ENCODE measurements at regions of chr1 and their contacts with region 1.

Region 1: DNA sequence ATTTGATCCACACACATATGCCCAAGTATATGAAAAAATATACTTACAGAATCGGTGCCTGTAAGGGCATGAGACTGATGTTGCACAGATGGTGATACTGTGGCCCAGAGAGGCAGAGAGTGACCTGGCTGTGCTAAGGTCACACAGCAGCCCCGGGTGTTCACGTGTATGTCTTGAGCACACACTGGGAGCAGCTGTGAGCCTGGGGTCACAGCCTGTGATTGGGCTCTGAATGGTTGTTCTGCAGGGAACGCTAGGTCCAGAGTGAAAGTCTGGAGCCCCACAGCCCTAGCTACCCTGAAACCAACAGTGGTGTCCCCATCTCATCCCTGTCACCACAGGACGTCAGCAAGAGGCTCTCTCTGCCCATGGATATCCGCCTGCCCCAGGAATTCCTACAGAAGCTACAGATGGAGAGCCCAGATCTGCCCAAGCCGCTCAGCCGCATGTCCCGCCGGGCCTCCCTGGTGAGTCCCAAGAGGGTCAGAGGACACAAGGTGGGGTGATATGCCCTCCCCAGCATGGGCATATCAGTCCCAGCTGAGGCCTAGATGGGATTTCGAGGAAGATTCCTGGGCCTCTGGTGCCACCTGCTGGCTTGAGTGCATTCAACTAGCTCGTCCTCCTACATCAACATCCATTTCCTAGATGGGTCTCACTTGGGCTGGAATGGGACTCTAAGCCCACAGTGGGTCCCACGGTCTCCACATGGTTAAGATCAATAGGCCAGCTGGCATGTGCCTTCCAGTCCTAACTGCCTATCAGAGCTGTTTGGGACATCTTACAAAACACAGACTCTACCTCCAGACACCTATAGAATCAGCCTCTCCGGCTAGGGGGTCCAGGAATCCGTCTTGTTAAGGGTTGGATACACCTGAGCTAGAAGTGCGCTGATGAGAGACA is 19.7 kb downstream of the CDK18 start:
- DNase-seq: peak; percentile 63 to 94
- H3K4me3 ChIP-seq: no peak overlapping the region
- H3K27ac ChIP-seq: no peak overlapping the region
- H3K4me1 ChIP-seq: peaks cover under 1 to 27% (median 12%) of the 10 kb centered on the region in 4 experiments
- H3K27me3 ChIP-seq: no peaks in the 10 kb centered on the region
- CTCF ChIP-seq: peak; percentile 73 to 94 (median 93)
- EP300 ChIP-seq: no peak
- POLR2A ChIP-seq: no peak
- RAD21 ChIP-seq: peak; percentile 96 to 97

Region 2: DNA sequence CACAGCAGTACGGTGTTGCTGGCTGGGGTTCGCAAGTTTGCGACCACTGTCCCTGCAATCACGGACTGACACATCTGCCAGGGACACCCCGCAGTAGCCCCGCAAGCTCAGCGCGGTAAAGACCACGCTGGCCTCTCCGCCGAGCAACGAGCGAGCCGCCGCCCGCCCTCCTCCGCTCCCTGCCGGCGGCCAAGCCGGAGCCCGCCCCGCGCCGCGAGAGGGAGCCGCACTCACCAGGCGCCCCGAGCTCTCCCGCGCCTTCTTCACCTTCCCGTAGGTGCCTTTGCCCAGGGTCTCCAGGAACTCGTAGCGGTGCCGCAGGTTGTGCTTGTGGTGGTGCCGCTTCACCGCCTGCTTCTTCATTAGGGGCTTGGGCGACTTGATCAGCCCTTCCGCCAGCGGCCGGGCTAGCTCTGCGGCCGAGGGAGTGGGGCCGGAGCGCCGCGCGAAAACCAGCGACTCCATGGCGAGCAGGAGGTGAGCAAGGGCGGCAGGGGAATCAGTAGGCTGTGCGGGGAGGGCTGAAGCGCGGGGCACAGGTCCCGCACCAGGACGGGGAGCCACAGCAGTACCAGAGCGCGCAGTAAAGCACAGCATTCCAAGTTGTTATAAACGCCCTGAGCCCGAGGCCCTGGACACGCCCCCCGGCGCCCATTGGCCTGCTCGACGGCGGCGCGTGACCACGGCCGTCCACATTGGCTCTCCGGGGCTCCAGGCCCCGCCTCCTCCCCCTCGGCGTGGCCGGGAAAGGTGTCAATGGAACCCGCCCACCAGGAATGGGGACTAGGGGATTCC is 202.8 kb before region 1 on chr1 and contains the start of gene NUAK2:
- CTCF ChIA-PET with region 1: interaction called, 17 read pairs
- POLR2A ChIA-PET with region 1: interaction called, 3 read pairs
- DNase-seq: peak; percentile 82 to 96
- H3K4me3 ChIP-seq: peak within 1 kb of the TSS; percentile 67 to 93 (median 80)
- H3K27ac ChIP-seq: peak within 1 kb of the TSS; percentile 81
- H3K4me1 ChIP-seq: peaks cover 26 to 37% (median 31%) of the 10 kb centered on the region in 4 experiments
- H3K27me3 ChIP-seq: no peaks in the 10 kb centered on the region
- CTCF ChIP-seq: no peak
- EP300 ChIP-seq: no peak
- POLR2A ChIP-seq: peak; percentile 63 to 92
- RAD21 ChIP-seq: no peak
- total RNA-seq, gene NUAK2: 12.7 and 12.9 TPM in 2 replicates

Region 3: DNA sequence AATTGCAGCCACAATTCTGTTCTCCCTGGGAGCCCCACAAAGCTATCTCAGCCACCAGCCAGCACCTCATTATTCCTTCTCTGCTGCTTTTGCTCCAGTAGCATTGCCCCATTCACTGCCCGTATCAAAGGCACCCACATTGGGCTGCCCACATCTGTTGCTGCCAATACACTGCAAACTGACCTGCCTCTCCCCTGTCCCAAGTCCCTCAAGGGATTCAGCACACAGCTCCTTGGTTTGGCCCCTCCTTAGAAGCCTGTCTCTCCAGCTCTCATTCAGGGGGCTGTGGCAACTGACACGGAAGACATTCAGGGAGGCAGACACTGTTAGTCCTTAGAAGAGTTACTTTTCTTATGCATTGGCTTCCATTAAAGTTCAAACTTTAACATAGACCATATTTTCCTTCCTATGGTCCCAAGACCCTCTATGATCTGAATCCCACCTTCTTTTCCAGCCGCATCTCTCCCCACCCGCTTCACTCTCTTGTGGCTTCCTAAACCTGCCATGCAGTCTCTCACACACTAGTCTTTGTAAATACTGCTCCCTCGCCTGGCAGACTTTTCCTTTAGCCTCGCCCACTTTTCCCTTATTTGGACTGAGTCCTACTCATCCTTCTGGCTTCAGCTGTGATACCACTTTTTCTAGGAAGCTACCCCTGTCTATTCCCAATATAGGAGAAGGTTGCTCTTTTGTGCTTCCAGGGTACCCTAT is 148.2 kb before region 1 on chr1:
- CTCF ChIA-PET with region 1: interaction called, 17 read pairs
- POLR2A ChIA-PET with region 1: no interaction called
- DNase-seq: no peak
- H3K4me3 ChIP-seq: peak overlapping the region in 3 of 4 experiments; percentile 4 to 36 (median 30); a peak in 4 of 8 replicates
- H3K27ac ChIP-seq: 0 out of 2 replicates have a peak overlapping the region, but pooled peaks have one; percentile 0
- H3K4me1 ChIP-seq: peaks cover 9 to 25% (median 19%) of the 10 kb centered on the region in 4 experiments; a peak in 5 of 7 replicates
- H3K27me3 ChIP-seq: no peaks in the 10 kb centered on the region
- CTCF ChIP-seq: no peak
- EP300 ChIP-seq: no peak
- POLR2A ChIP-seq: no peak
- RAD21 ChIP-seq: no peak

Region 4: DNA sequence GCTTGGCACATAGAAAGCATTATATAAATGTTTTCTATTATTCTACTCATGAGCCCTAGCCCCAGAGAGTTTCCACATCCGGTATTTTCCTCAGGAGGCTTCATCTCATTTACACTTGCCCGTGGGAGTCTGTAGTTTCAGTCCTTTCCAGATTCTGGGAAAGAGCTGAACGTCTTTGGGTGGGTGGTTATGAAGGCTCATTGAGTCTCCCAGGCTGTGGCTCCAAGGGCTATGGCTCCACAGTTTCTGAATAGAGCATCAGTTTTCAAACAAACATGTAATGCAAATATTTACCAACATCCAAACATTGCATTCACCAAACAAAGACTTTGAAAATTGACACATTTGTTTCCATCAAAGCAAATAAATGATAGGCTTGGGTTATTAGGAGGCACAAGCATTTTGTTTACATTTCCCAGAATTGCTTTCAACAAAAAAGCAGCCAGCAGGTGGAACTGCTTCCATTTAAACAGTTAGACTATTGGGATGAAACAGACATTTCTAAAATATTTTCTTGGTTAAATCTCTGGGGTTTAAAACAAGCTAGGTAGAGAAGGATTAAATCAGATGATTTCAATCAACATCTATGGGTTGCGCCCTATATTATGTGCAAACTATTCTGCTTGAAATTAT is 101.0 kb before region 1 on chr1:
- CTCF ChIA-PET with region 1: interaction called, 16 read pairs
- POLR2A ChIA-PET with region 1: no interaction called
- DNase-seq: no peak
- H3K4me3 ChIP-seq: no peak overlapping the region
- H3K27ac ChIP-seq: no peak overlapping the region
- H3K4me1 ChIP-seq: peaks cover 0 to 7% (median 2%) of the 10 kb centered on the region in 4 experiments; a peak in 4 of 7 replicates
- H3K27me3 ChIP-seq: no peaks in the 10 kb centered on the region; a peak in 2 of 7 replicates
- CTCF ChIP-seq: peak in 1 of 3 experiments; percentile 13; a peak in 1 of 4 replicates
- EP300 ChIP-seq: no peak
- POLR2A ChIP-seq: no peak
- RAD21 ChIP-seq: peak; percentile 7 to 20; a peak in 3 of 4 replicates

Region 5: DNA sequence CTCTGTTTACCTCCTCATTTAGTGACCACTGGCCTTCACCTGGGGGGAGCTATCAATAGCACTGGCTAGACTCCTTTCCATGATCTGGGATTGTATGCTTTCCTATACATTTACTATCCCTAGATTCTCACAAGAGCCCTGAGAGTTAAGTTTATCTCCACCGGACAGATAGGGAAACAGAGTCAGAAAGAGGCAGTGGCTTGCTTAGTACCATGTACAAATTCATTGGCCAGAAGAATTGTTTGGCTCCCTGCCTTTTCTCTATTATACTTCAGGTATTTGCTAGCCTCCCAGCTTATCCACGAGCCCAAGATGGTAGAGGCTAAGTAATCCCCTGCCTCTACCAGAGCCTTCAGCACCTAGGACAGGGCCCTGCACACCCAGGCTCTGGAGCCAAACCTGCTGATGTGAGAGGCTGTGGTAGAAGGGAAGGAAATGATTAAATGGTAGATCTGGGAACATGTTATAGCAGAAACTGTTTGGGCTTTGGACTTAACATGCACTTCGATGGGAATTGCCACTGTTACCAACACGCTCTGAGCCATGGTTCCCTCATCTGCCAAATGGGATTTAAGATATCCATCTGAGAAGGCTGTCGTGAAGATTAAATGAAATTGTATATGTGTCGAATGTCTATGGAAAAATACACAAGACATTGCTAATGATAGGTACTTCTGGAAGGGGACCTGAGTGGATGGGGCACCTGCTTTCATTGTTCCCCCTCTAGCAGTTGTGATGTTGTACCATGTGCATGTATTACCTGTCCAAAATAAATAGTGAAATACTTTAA is 65.2 kb before region 1 on chr1:
- CTCF ChIA-PET with region 1: interaction called, 13 read pairs
- POLR2A ChIA-PET with region 1: interaction called, 4 read pairs
- DNase-seq: peak in 1 of 2 experiments; percentile 80
- H3K4me3 ChIP-seq: no peak overlapping the region
- H3K27ac ChIP-seq: no peak overlapping the region
- H3K4me1 ChIP-seq: peaks cover 7 to 23% (median 13%) of the 10 kb centered on the region in 4 experiments
- H3K27me3 ChIP-seq: peaks cover 0 to 2% (median 0%) of the 10 kb centered on the region in 4 experiments; a peak in 2 of 7 replicates
- CTCF ChIP-seq: no peak
- EP300 ChIP-seq: no peak
- POLR2A ChIP-seq: no peak
- RAD21 ChIP-seq: peak in 1 of 2 experiments; percentile 32; a peak in 1 of 4 replicates

Region 6: GRCh38 chr1:205536759-205537361 is 12.7 kb after region 1 on chr1:
- CTCF ChIA-PET with region 1: interaction called, 60 read pairs
- POLR2A ChIA-PET with region 1: interaction called, 4 read pairs
- DNase-seq: peak in 1 of 2 experiments; percentile 41
- H3K4me3 ChIP-seq: no peak overlapping the region
- H3K27ac ChIP-seq: no peak overlapping the region
- H3K4me1 ChIP-seq: no peaks in the 10 kb centered on the region; a peak in 2 of 7 replicates
- H3K27me3 ChIP-seq: peaks cover 0 to 19% (median 15%) of the 10 kb centered on the region in 4 experiments; a peak in 6 of 7 replicates
- CTCF ChIP-seq: no peak
- EP300 ChIP-seq: no peak
- POLR2A ChIP-seq: no peak
- RAD21 ChIP-seq: no peak

Region 7: DNA sequence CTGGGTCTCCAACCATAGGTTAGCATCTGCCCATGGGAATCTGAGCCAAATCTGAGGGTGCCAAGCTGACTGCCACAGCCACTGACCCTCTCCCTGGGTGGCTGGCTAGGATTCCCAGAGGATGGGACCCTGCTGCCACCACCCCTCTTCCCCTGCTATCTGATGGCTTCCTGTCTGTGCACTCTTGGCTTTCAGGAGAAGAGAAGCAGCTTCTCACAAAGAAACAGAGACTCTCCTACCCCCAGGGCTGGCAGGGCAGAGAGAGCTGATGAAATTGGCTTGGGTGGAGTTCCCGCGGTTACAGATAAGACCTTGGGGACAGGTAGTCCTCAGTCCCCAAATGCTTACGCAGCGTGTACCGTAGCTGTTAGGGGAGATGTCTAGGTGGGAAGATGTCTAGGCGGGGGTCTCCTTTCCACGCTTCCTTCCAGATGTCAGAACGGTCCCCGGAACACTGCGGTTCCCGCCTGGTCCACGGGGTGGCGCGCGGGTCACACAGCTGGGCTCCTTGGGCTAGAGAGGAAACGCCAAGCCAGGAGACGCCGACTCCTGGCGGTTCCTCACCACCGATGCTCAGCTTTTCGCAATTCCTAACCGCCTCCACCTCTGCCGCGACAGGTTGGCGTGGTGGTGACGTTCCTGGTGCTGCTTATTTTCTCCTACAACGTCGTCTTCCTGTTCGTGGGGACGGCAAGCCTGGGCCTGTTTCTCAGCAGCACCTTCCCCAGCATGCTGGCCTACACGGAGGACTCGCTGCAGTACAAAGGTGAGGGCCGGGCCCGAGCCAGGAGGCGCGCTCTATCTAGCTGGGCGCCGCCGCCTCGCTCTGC is 67.6 kb after region 1 on chr1:
- CTCF ChIA-PET with region 1: interaction called, 24 read pairs
- POLR2A ChIA-PET with region 1: interaction called, 3 read pairs
- DNase-seq: peak; percentile 58 to 100
- H3K4me3 ChIP-seq: peak overlapping the region; percentile 26 to 57 (median 36); a peak in 5 of 8 replicates
- H3K27ac ChIP-seq: no peak overlapping the region
- H3K4me1 ChIP-seq: peaks cover 0 to 7% (median 4%) of the 10 kb centered on the region in 4 experiments; a peak in 5 of 7 replicates
- H3K27me3 ChIP-seq: 0 out of 7 replicates have a peak, but pooled peaks cover 0 to 2% (median 0%) of the 10 kb centered on the region in 4 experiments
- CTCF ChIP-seq: peak; percentile 91 to 99 (median 94)
- EP300 ChIP-seq: no peak
- POLR2A ChIP-seq: 0 out of 3 replicates have a peak, but pooled peaks of 1 of the 2 experiments have one; percentile 39
- RAD21 ChIP-seq: peak; percentile 98

Region 8: DNA sequence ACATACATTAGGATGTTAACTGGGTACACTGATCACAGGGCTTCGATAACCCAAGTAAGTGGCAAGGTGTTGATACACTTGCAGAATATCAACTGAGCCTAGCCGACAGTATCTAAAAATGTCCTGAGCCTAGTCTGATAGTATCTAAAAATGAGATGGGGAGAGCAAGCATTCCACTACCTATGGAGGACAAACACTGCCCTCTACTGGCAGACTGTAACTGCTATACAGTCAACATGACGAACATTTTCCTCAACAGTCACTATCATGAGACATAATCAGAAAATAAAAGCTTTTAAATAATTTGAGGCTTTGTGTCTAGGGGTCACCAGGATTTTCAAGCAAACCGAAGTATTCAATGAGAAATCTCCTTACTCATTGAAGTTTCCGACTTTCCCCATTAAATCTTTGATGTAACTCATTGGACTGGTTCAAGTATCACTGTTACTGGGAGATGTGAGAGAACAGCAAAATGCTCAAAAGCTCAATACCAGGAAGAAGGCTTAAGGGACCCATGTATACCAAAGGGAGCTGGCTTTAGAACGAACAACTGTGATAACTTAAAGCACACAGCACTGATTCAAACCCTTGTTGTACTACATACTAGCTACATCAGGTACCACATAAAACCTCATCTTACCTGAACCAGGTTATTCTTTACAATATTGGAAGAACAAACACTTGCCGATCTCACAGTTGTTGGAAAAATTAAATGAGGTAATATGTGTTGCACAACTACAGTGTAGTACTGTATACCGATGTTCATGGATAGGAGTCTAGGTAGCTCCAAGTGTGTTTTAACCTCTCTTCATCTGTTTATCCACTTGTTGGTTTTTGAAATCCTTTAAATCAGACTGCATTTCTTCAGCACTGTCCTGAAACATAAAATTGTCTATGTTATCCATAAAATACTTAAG is 187.2 kb after region 1 on chr1:
- CTCF ChIA-PET with region 1: no interaction called
- POLR2A ChIA-PET with region 1: no interaction called
- DNase-seq: no peak
- H3K4me3 ChIP-seq: no peak overlapping the region
- H3K27ac ChIP-seq: peak overlapping the region; percentile 12; the same call in 1 of the 2 replicates
- H3K4me1 ChIP-seq: peaks cover 0 to 3% (median 1%) of the 10 kb centered on the region in 4 experiments; a peak in 2 of 7 replicates
- H3K27me3 ChIP-seq: no peaks in the 10 kb centered on the region
- CTCF ChIP-seq: peak in 2 of 3 experiments; percentile 85 to 86; a peak in 3 of 4 replicates
- EP300 ChIP-seq: no peak
- POLR2A ChIP-seq: no peak
- RAD21 ChIP-seq: peak; percentile 94 to 95

Measured in H1 (cell line).